PC-3 (cell line): ENCODE measurements at regions of chr20 and their contacts with region 1.

Region 1: GRCh38 chr20:33731693-33732165 is at the start of gene ZNF341:
- DNase-seq: peak; percentile 84
- ATAC-seq: peak; percentile 77
- H3K4me3 ChIP-seq: peak within 1 kb of the TSS; percentile 73
- H3K27ac ChIP-seq: peak within 1 kb of the TSS; percentile 53
- H3K4me1 ChIP-seq: peaks cover 17% of the 10 kb centered on the region
- H3K27me3 ChIP-seq: no peaks in the 10 kb centered on the region
- CTCF ChIP-seq: peak; percentile 79
- total RNA-seq, gene ZNF341: 4.4 and 5.1 TPM in 2 replicates

Region 2: GRCh38 chr20:33674295-33675135 is 57.2 kb before region 1 on chr20 and contains the start of gene NECAB3:
- CTCF ChIA-PET with region 1: no interaction called
- POLR2A ChIA-PET with region 1: no interaction called
- intact Hi-C with region 1: loop called (anchors 5 kb)
- DNase-seq: peak; percentile 83
- ATAC-seq: peak; percentile 86
- H3K4me3 ChIP-seq: peak within 1 kb of the TSS; percentile 92
- H3K27ac ChIP-seq: no peak within 1 kb of the TSS
- H3K4me1 ChIP-seq: peaks cover 21% of the 10 kb centered on the region
- H3K27me3 ChIP-seq: no peaks in the 10 kb centered on the region
- CTCF ChIP-seq: no peak
- total RNA-seq, gene NECAB3: 41.2 and 43.5 TPM in 2 replicates

Region 3: DNA sequence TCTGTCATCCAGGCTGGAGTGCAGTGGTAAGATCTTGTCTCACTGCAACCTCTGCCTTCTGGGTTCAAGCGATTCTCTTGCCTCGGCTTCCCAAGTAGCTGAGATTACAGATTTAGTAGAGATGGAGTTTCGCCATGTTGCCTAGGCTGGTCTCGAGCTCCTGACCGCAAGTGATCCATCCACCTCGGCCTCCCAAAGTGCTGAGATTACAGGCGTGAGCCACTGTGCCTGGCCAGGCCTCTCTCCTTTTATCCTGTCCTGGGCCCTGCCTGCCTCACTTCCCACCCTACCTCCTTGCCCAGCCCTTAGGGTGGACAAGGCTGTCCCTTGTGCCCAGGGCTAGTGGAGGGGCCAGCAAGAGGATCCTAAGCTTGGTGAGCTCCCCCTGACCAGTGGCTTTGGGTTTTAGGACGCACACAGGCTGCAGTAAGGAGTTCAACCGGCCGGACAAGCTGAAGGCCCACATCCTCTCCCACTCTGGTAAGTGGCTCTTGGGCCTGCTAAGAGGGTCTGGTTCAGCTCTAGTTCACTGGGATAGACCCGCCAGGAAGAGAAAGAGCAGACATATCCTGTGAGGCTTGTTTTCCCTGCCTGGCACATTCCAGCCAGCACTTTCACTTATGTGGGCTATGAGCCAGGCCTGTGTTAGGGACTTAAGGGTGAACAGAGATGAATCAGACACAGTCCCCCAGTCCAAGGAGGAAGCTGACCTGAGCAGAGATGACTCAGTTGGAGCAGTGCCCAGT is 57.6 kb after region 1 on chr20:
- CTCF ChIA-PET with region 1: interaction called, 4 read pairs
- POLR2A ChIA-PET with region 1: no interaction called
- intact Hi-C with region 1: loop called (anchors 5 kb)
- DNase-seq: peak; percentile 100
- ATAC-seq: peak; percentile 88
- H3K4me3 ChIP-seq: peak overlapping the region; percentile 44; the same call in 1 of the 2 replicates
- H3K27ac ChIP-seq: peak overlapping the region; percentile 90
- H3K4me1 ChIP-seq: peaks cover 41% of the 10 kb centered on the region
- H3K27me3 ChIP-seq: no peaks in the 10 kb centered on the region
- CTCF ChIP-seq: no peak

Region 4: DNA sequence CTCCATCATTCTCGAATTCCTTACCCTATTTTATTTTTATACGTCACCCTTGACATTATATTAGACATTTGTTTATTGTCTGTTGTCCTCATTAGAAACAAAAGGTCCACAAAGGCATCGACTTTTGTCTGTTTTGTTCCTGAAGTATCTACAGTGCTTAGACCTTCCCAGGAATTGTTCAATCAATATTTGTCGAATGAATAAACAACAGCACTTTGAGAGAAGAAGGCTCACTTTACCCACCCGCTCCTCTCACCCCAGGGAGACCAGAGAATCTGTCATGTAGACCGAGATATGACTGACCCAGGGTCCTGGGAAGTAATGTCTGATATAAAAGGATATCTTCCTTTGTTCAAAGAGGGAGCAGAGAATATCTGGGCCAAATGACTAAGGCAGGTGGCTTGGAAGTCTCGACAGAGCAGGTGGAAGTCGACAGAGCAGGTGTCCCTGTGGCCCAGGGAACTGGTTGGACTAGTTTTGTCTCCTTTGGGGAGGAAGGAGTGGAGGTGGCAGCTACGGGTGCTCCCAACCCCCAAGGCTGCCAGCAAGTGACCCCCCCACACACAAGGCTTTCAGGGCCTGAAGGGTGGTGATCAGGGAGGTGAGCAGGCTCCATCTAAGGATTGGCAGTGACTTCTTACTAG is 64.7 kb after region 1 on chr20:
- CTCF ChIA-PET with region 1: no interaction called
- POLR2A ChIA-PET with region 1: no interaction called
- intact Hi-C with region 1: loop called (anchors 2 kb)
- DNase-seq: peak; percentile 95
- ATAC-seq: peak; percentile 66
- H3K4me3 ChIP-seq: peak overlapping the region; percentile 42; the same call in 1 of the 2 replicates
- H3K27ac ChIP-seq: peak overlapping the region; percentile 92
- H3K4me1 ChIP-seq: peaks cover 37% of the 10 kb centered on the region
- H3K27me3 ChIP-seq: no peaks in the 10 kb centered on the region
- CTCF ChIP-seq: no peak

Region 5: DNA sequence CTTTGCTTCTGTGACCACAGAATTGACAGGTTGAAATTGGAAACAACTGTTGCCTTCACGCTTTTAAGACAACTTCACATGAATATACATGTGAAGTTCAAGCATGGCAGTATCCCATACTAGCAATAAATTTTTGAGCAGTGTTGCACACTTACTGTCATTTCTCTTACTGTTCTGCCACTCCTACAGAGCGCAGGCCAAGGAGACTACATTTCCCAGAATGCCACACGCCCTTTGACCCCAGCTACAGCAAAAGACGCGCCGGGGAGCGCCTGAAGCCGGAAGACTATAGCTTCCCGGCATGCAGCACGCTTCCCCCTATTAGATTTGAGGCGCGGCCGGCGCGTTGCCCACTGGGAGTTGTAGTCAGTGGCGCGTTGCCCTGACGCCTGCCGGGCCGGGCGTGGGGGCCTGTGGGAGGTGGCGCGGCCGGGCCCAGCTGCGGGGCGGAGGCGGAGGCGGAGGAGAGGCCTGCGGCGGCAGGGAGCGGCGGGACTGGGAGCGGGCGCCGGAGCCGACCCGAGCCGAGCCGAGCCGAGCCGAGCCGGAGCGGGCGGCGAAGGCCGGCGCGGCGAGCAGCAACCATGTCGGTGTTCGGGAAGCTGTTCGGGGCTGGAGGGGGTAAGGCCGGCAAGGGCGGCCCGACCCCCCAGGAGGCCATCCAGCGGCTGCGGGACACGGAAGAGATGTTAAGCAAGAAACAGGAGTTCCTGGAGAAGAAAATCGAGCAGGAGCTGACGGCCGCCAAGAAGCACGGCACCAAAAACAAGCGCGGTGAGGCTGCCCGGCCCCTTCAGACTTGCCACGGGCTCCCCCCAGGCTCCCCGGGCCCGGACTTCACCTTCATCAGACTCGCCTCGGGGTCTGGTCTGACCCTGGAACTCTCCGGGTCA is 79.4 kb after region 1 on chr20 and contains the start of gene CHMP4B:
- CTCF ChIA-PET with region 1: no interaction called
- POLR2A ChIA-PET with region 1: no interaction called
- intact Hi-C with region 1: loop called (anchors 1 kb)
- DNase-seq: peak; percentile 99
- ATAC-seq: peak; percentile 88
- H3K4me3 ChIP-seq: peak within 1 kb of the TSS; percentile 89
- H3K27ac ChIP-seq: peak within 1 kb of the TSS; percentile 87
- H3K4me1 ChIP-seq: peaks cover 30% of the 10 kb centered on the region
- H3K27me3 ChIP-seq: no peaks in the 10 kb centered on the region
- CTCF ChIP-seq: no peak
- total RNA-seq, gene CHMP4B: 68.8 and 91.1 TPM in 2 replicates

Region 6: DNA sequence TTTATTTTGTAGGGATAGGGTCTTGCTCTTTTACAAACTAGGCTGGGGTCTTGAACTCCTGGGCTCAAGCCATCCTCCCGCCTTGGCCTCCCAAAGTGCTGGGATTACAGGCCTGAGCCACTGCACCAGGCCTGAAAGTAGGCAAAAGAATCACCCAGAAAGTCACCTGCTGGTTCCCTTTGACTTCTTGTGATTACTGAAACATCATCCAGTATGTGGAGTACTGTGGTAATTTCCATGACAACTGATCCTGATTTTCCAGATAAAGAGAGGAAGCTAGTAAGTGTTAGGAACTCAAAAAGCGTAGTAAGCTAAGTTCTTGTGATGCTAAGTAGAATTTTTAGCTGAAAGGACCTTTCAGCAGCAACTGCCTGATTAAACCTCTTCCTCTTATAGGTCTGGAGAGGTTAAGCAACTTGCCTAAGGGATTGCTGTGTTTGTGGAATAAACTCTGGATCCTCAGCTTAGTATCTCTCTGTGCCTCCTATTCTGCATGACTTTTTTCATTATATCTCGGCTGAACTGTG is 278.7 kb after region 1 on chr20:
- CTCF ChIA-PET with region 1: no interaction called
- POLR2A ChIA-PET with region 1: no interaction called
- intact Hi-C with region 1: no loop called
- DNase-seq: no peak
- ATAC-seq: no peak
- H3K4me3 ChIP-seq: no peak overlapping the region
- H3K27ac ChIP-seq: no peak overlapping the region
- H3K4me1 ChIP-seq: no peaks in the 10 kb centered on the region
- H3K27me3 ChIP-seq: no peaks in the 10 kb centered on the region
- CTCF ChIP-seq: no peak

Region 7: DNA sequence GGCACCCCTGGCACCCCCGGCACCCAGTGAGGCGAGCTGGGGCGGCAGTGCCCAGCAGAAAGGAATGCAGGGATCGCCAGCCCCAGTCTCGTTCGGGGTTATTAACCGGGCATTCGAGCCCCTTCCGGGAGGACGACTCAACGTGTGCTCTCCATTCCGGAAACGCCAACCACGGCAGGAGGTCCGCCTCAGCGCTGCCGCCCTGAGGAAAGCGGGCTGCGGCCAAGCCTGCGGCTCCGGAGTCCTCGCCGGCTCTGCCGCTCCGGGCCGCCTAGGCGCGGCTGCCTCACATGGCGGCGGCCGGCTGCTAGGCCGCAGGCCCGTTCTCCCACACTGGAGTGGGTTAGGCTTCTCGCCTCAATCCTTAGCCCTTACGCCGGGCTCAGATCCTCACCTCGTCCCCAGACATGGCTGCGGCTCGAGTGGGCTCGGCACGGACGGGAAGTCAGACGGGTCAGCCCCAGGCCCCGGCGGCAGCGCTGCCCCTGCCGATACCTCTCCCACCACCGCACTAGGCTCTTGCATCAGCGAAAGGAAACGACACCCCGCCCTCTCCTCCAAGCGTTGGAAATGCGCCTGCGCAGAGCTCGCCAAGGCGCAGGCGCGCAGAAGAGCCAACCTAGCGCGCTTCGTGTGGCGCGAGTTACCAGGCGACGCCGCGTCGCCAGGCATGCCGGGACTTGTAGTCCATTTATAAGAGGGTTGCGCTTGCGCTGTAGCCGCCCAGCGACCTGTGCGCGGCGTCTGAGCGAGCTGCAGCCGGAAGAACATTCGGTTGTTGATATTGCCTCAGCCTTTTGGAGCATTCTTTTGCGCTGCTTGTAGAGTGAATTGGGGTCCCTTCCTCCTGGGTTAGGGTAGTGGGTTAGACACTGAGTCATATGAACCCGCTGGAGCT is 380.2 kb after region 1 on chr20 and contains the start of gene EIF2S2:
- CTCF ChIA-PET with region 1: no interaction called
- POLR2A ChIA-PET with region 1: interaction called, 3 read pairs
- intact Hi-C with region 1: loop called (anchors 5 kb)
- DNase-seq: peak; percentile 99
- ATAC-seq: peak; percentile 92
- H3K4me3 ChIP-seq: peak within 1 kb of the TSS; percentile 97
- H3K27ac ChIP-seq: peak within 1 kb of the TSS; percentile 68
- H3K4me1 ChIP-seq: peaks cover 27% of the 10 kb centered on the region; the same call in 1 of the 2 replicates
- H3K27me3 ChIP-seq: no peaks in the 10 kb centered on the region
- CTCF ChIP-seq: no peak
- total RNA-seq, gene EIF2S2: 75.4 and 83.4 TPM in 2 replicates